Activated B cell treated with CpG ODN at 0.5 μM for 24 hours (primary cell): ENCODE measurements at regions of chr14 and their contacts with region 1.

Region 1: DNA sequence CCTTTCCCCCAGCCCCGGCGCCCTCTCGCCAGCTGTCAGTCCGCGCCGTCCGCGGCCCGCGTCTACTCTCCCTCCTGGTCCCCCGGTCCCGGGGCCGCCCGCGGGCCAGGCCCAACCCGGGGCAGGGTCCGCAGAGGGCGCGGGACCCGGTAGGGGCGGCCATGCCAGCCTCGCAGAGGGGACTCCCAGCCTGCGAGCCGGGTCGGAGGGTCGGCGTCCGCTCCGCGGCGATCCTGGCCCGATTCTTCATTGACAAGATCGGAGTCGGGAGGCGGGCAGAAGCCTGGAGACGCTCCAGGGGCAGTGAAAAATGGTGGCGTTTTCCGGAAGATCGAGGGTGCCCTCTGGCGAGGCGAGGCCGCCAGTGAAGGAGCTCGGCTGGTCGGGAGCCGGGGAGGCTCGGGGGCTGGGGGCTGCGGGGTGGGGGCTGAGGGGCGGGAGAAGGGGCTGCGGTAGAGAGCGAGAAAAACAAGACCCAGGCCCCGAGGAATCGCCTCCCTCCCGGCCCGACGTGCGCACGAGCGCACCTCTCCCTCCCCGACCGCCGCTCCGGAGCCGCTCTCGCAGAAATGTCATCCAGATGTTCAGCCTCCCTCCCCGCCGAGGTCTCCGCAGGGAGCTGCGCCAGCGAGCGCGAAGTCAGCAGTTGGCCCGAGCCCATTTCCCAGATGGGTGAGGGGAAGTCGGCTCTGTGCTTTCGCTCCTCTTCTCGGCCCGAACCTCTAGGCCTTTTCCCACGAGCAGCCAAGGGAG is 647 bp upstream of the TGFB3 start:
- DNase-seq: peak; percentile 79
- ATAC-seq: peak; percentile 69
- H3K4me3 Mint-ChIP-seq: peak overlapping the region; percentile 87
- H3K27ac Mint-ChIP-seq: peak overlapping the region; percentile 72
- H3K4me1 Mint-ChIP-seq: peaks cover 64% of the 10 kb centered on the region
- H3K27me3 Mint-ChIP-seq: no peaks in the 10 kb centered on the region
- CTCF ChIP-seq: no peak

Region 2: GRCh38 chr14:75577729-75578101 is 404.7 kb before region 1 on chr14:
- CTCF ChIA-PET with region 1: interaction called, 29 read pairs
- POLR2A ChIA-PET with region 1: no interaction called
- intact Hi-C with region 1: loop called (anchors 1 kb)
- DNase-seq: peak; percentile 60
- ATAC-seq: peak; percentile 85
- H3K4me3 Mint-ChIP-seq: peak overlapping the region; percentile 89
- H3K27ac Mint-ChIP-seq: peak overlapping the region; percentile 72
- H3K4me1 Mint-ChIP-seq: peaks cover 29% of the 10 kb centered on the region
- H3K27me3 Mint-ChIP-seq: peaks cover 3% of the 10 kb centered on the region
- CTCF ChIP-seq: peak; percentile 36

Region 3: DNA sequence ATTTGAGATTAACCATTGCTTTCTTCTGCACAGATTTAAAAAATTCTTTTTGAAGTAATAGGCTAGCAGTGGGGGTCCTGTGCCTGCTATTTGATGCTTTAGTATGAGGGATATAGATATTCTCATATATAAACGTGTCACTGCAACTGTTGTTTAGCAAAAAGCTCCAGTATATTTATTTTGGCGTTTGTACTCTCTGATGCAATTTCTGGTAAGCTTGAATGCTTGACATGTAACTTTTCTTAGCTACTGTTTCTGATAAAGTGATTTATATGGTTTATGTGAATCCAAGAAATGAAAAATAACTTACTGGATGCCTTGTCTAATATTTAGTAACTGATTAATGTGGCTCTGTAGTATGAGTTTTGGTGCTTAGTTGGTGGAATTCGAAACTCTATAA is 244.2 kb before region 1 on chr14:
- CTCF ChIA-PET with region 1: no interaction called
- POLR2A ChIA-PET with region 1: no interaction called
- intact Hi-C with region 1: no loop called
- DNase-seq: no peak
- ATAC-seq: no peak
- H3K4me3 Mint-ChIP-seq: no peak overlapping the region
- H3K27ac Mint-ChIP-seq: no peak overlapping the region
- H3K4me1 Mint-ChIP-seq: no peaks in the 10 kb centered on the region
- H3K27me3 Mint-ChIP-seq: no peaks in the 10 kb centered on the region
- CTCF ChIP-seq: no peak

Region 4: DNA sequence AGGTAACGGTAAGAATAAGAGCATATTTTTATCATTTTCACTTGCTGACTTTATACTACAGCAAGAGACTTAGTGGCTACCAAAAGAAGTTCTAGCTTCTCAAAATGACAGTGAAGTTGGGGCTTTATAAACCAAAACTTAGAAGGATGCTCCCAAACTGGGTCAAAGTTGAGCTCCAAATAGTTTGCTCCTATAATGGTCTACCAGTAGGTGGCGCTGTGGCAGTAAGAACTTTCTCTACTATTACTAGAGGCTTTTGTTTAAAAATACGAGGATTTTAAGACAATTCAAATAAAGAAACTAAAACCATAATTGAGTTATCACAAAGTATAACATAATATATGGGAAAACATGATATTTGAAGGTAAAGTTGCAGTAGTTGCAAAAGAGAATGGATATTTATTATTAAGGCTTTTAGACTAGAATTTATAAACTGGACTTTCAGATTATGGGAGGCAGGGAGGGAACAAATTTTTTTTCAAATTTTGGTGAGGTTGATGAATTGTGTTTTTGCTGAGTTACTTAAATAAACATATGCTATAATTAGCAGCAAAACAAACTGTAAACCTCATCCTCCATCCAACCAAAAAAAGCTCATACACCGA is 75.7 kb before region 1 on chr14:
- CTCF ChIA-PET with region 1: interaction called, 363 read pairs
- POLR2A ChIA-PET with region 1: interaction called, 25 read pairs
- intact Hi-C with region 1: loop called (anchors 1 kb)
- DNase-seq: no peak
- ATAC-seq: no peak
- H3K4me3 Mint-ChIP-seq: no peak overlapping the region
- H3K27ac Mint-ChIP-seq: no peak overlapping the region
- H3K4me1 Mint-ChIP-seq: no peaks in the 10 kb centered on the region
- H3K27me3 Mint-ChIP-seq: no peaks in the 10 kb centered on the region
- CTCF ChIP-seq: peak; percentile 29

Region 5: DNA sequence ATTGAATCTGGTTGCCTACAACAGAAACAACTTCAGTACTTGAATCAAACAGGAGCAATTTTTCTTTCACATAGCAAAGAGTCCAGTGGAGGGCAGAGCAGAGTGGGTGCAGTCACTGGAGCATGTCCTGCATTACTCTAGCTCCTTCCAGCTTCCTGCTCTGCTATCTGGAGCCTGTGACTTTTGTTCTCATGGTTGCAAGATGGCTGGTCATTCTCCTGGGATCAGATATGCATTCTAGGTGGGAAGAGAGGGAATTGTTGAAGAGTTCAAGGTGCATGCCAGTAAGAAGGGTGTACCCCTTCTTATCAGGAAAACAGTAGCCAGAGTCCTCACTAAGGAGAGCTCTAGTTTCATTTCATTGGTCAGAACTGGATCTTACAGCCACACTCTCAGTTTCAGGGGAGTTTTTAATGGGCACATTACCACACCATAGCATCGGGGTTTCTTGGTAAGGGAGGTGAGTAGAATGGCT is 11.2 kb after region 1 on chr14:
- CTCF ChIA-PET with region 1: interaction called, 15 read pairs
- POLR2A ChIA-PET with region 1: no interaction called
- intact Hi-C with region 1: no loop called
- DNase-seq: no peak
- ATAC-seq: no peak
- H3K4me3 Mint-ChIP-seq: no peak overlapping the region
- H3K27ac Mint-ChIP-seq: no peak overlapping the region
- H3K4me1 Mint-ChIP-seq: peaks cover 4% of the 10 kb centered on the region
- H3K27me3 Mint-ChIP-seq: no peaks in the 10 kb centered on the region
- CTCF ChIP-seq: no peak

Region 6: DNA sequence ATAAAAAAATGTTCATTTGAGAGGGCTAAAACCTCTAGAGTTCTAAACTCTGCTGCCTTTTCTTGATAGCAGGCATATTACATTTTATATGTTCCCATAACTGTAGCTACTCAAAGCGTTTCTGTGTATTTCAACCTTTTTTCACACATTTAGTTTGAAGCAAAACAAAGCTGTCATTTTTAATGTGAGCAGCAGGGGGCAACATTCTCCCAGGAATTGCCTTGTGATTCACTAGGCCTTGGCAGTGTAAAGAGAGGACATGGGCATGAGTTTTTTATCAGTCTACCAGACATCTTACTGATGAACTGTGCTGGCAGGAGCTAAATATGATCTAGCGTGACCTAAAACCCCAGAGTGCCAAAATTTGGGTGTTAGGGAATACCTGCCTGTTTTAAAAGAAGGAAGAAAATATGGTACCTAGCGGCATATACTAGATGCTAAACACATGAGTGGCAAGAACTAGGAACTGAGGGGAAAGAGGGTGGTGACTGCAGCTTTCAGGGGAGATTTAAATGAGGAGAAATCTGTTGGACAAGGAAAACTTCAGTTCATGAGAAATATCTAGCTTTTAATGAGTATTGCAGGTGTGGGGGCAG is 68.5 kb after region 1 on chr14:
- CTCF ChIA-PET with region 1: no interaction called
- POLR2A ChIA-PET with region 1: no interaction called
- intact Hi-C with region 1: no loop called
- DNase-seq: no peak
- ATAC-seq: peak; percentile 49
- H3K4me3 Mint-ChIP-seq: no peak overlapping the region
- H3K27ac Mint-ChIP-seq: no peak overlapping the region
- H3K4me1 Mint-ChIP-seq: peaks cover 5% of the 10 kb centered on the region
- H3K27me3 Mint-ChIP-seq: no peaks in the 10 kb centered on the region
- CTCF ChIP-seq: no peak